ENCODE measurements at regions of chr14 and their contacts with region 1.

Region 1: GRCh38 chr14:59428581-59429012 is 36.6 kb downstream of the GPR135 start:
- DNase-seq: no peak
- CTCF ChIP-seq: no peak

Region 2: DNA sequence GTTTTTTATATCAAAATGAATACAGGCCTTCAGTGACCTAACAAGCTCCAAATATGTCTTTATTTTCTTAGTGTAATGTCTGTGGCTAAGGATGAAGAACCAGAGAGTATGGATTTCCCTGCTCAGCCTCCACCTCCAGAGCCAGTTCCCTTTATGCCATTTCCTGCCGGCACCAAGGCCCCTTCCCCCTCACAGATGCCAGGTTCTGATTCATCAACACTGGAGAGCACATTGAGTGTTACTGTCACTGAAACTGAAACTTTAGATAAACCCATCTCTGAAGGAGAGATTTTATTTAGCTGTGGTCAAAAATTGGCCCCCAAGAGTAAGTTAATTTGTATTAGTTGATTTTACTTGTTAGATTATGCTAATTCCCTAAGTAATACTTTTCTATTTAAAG is 940.0 kb before region 1 on chr14:
- in situ Hi-C with region 1: loop called (anchors 25 kb)
- DNase-seq: peak; percentile 4
- CTCF ChIP-seq: no peak

Region 3: DNA sequence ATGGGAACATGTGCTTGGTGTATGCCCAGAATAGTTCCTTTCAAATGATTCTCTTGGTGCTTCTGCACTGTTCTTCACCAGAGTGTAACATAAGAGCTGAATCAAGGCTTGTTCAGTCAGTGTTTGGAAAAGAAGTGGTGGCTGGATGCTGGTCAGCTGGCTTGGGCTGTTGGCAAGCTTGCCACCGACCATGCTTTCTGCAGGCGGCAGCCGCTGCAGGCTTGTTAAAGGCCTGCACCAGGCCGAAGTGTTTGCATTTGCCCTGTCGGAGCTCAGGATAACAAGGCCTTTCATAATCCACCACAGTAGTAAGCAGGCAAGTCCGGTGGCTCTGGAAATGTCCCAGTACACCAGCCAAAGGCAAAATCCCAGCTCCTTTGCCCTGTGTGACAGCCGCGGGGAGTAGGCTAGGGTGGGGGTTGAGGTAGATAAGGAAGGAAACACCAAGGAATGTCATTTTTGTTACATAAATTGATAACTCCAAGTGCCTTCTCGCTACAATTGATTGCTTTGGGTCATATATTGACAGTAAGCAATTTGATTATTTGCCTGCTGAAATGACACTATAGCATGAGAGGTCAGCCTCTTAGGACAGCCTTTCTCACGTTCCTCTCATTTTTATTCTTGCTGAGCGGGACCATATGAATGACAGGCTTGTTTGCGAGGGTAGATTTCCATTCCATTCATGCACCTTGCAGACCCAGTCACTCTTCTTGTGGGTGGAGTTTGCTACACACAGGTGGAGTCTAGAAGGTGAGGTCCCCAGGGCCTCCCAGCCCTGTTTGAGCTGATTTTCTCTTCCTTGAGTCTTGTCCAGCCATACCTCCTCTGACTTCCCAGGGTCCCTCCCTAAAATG is 213.0 kb before region 1 on chr14:
- in situ Hi-C with region 1: no loop called
- DNase-seq: no peak
- CTCF ChIP-seq: no peak